Heart right ventricle (tissue), 16 donors: ENCODE measurements at regions of chr3 and their contacts with region 1.

Region 1: GRCh38 chr3:9249273-9250192 is at the start of gene SRGAP3:
- DNase-seq: peak; percentile 69 to 92
- ATAC-seq: peak; percentile 93 to 97 (median 95)
- H3K4me3 ChIP-seq: peak within 1 kb of the TSS; percentile 31 to 62 (median 58)
- H3K27ac ChIP-seq: peak within 1 kb of the TSS; percentile 13 to 84 (median 65)
- H3K4me1 ChIP-seq: peaks cover 2 to 40% (median 20%) of the 10 kb centered on the region in 9 donors
- H3K27me3 ChIP-seq: peaks cover 0 to 3% (median 0%) of the 10 kb centered on the region in 7 donors
- CTCF ChIP-seq: peak in 7 of 9 donors; percentile 8 to 50 (median 45)
- total RNA-seq, gene SRGAP3: 2.4 to 16.1 (median 12.1) TPM

Region 2: GRCh38 chr3:9135930-9136525 is 113.5 kb before region 1 on chr3:
- intact Hi-C with region 1: loop called in 2 of 10 experiments (anchors 10 kb)
- DNase-seq: peak in 1 of 2 donors; percentile 25
- ATAC-seq: peak; percentile 49 to 76 (median 55)
- H3K4me3 ChIP-seq: peak overlapping the region in 9 of 10 donors; percentile 35 to 53 (median 45)
- H3K27ac ChIP-seq: peak overlapping the region in 3 of 10 donors; percentile 4 to 21 (median 19)
- H3K4me1 ChIP-seq: peaks cover 0 to 20% (median 5%) of the 10 kb centered on the region in 9 donors
- H3K27me3 ChIP-seq: peaks cover 0 to 23% (median 8%) of the 10 kb centered on the region in 7 donors
- CTCF ChIP-seq: no peak

Region 3: GRCh38 chr3:9147215-9147895 is 102.2 kb before region 1 on chr3:
- intact Hi-C with region 1: loop called in 1 of 10 experiments (anchors 10 kb)
- DNase-seq: no peak
- ATAC-seq: no peak
- H3K4me3 ChIP-seq: no peak overlapping the region
- H3K27ac ChIP-seq: no peak overlapping the region
- H3K4me1 ChIP-seq: peaks cover 0 to 13% (median 2%) of the 10 kb centered on the region in 9 donors
- H3K27me3 ChIP-seq: no peaks in the 10 kb centered on the region
- CTCF ChIP-seq: no peak

Region 4: DNA sequence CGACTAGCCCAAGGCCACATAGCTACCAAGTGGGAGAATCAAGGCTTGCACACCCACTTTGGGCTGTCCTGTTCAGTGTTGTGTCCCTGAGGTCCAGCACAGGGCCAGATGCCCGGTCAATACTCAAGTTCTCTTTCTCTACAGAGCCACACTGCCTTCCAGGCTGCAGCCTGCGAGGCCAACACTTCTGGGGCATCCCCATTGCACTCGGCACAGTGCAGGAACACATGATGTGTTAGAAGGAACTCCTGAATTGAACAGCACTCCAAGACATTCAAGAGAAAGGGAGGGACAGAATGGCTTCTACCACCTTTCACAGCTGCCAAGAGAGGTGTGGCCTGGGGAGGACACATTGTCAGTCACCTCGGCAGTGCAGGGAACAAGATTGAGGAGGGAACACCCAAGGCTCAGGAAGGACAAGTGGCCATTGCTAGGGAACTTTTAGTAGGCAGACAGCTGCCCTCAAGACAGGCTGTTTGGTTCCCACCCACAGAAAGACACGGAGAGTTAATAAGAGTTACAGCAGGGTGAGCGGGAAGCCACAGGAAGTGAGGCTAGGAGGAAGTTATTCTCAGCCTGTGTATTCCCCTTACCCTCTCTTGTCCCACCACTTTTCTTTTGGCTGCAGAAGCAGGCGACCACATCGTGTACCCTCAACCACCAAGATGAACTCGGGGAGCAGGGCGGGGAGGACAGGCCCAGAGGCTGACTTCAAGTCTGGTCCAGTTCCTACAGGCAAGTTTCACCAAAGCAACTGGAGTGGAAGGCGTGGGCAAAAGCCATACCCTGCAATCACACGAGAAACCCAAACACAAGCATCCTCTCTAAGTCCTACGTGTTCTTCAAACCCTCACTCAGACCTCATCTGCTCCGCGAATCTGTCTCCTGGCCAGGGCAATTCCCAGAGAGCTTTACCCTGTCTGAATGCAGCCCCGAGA is 69.4 kb before region 1 on chr3:
- intact Hi-C with region 1: loop called in 1 of 10 experiments (anchors 5 kb)
- DNase-seq: no peak
- ATAC-seq: peak in 3 of 8 donors; percentile 13 to 51 (median 48)
- H3K4me3 ChIP-seq: no peak overlapping the region
- H3K27ac ChIP-seq: peak overlapping the region in 1 of 10 donors; percentile 28
- H3K4me1 ChIP-seq: peaks cover 0 to 35% (median 10%) of the 10 kb centered on the region in 9 donors
- H3K27me3 ChIP-seq: no peaks in the 10 kb centered on the region
- CTCF ChIP-seq: no peak

Region 5: DNA sequence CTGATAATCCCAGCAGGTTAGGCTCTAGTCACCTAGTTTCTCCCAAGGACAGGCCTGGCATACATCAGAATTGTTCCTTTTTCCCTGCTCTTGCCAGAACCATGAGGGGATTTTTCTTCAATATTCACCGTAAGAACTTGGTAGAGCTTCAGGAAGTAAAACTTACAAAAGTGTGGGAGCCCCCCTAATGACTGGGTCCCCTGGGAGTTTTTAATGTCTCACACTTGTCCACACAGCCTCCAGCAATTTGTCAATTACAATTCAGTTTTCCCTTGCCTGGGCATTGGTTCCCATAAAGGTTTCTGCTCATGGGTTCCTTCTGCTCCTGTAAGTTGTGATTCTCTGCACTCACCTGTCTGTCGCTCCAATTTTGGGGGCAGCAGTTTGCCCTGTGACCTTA is 275.5 kb after region 1 on chr3:
- intact Hi-C with region 1: no loop called
- DNase-seq: no peak
- ATAC-seq: no peak
- H3K4me3 ChIP-seq: no peak overlapping the region
- H3K27ac ChIP-seq: no peak overlapping the region
- H3K4me1 ChIP-seq: no peaks in the 10 kb centered on the region
- H3K27me3 ChIP-seq: peaks cover 0 to 14% (median 0%) of the 10 kb centered on the region in 7 donors
- CTCF ChIP-seq: no peak